Naive thymus-derived CD4-positive, alpha-beta T cell (primary cell): ENCODE measurements at regions of chr1 and their contacts with region 1.

Region 1: GRCh38 chr1:3618881-3619671 is 5.7 kb upstream of the TPRG1L start:
- DNase-seq: peak; percentile 47 to 82 (median 75)
- ATAC-seq: peak; percentile 96
- H3K4me3 ChIP-seq: no peak overlapping the region
- H3K4me3 Mint-ChIP-seq: peak overlapping the region in 2 of 10 donors; percentile 17 to 37
- H3K27ac ChIP-seq: no peak overlapping the region
- H3K27ac Mint-ChIP-seq: peak overlapping the region in 2 of 9 donors; percentile 1 to 59
- H3K4me1 ChIP-seq: peaks cover 11 to 15% of the 10 kb centered on the region in 2 donors
- H3K4me1 Mint-ChIP-seq: peaks cover 19 to 46% (median 34%) of the 10 kb centered on the region in 7 donors
- H3K27me3 ChIP-seq: no peaks in the 10 kb centered on the region
- H3K27me3 Mint-ChIP-seq: peaks cover 0 to 14% (median 6%) of the 10 kb centered on the region in 5 donors

Region 2: GRCh38 chr1:3491291-3492246 is 127.5 kb before region 1 on chr1:
- CTCF ChIA-PET with region 1: interaction called, 26 read pairs
- POLR2A ChIA-PET with region 1: interaction called, 5 read pairs
- intact Hi-C with region 1: loop called (anchors 1 kb)
- DNase-seq: peak; percentile 65 to 90 (median 83)
- ATAC-seq: peak; percentile 96
- H3K4me3 ChIP-seq: no peak overlapping the region
- H3K4me3 Mint-ChIP-seq: peak overlapping the region in 7 of 10 donors; percentile 26 to 76 (median 62)
- H3K27ac ChIP-seq: no peak overlapping the region
- H3K27ac Mint-ChIP-seq: peak overlapping the region in 2 of 9 donors; percentile 28 to 38
- H3K4me1 ChIP-seq: no peaks in the 10 kb centered on the region
- H3K4me1 Mint-ChIP-seq: peaks cover 2 to 7% (median 5%) of the 10 kb centered on the region in 7 donors
- H3K27me3 ChIP-seq: no peaks in the 10 kb centered on the region
- H3K27me3 Mint-ChIP-seq: no peaks in the 10 kb centered on the region

Region 3: GRCh38 chr1:3518256-3518655 is 100.8 kb before region 1 on chr1:
- CTCF ChIA-PET with region 1: interaction called, 4 read pairs
- POLR2A ChIA-PET with region 1: interaction called, 4 read pairs
- intact Hi-C with region 1: loop called in 1 of 2 experiments (anchors 1 kb)
- DNase-seq: peak in 4 of 9 donors; percentile 28 to 35 (median 32)
- ATAC-seq: no peak
- H3K4me3 ChIP-seq: no peak overlapping the region
- H3K4me3 Mint-ChIP-seq: no peak overlapping the region
- H3K27ac ChIP-seq: no peak overlapping the region
- H3K27ac Mint-ChIP-seq: no peak overlapping the region
- H3K4me1 ChIP-seq: no peaks in the 10 kb centered on the region
- H3K4me1 Mint-ChIP-seq: peaks cover 0 to 2% (median 0%) of the 10 kb centered on the region in 7 donors
- H3K27me3 ChIP-seq: no peaks in the 10 kb centered on the region
- H3K27me3 Mint-ChIP-seq: no peaks in the 10 kb centered on the region

Region 4: DNA sequence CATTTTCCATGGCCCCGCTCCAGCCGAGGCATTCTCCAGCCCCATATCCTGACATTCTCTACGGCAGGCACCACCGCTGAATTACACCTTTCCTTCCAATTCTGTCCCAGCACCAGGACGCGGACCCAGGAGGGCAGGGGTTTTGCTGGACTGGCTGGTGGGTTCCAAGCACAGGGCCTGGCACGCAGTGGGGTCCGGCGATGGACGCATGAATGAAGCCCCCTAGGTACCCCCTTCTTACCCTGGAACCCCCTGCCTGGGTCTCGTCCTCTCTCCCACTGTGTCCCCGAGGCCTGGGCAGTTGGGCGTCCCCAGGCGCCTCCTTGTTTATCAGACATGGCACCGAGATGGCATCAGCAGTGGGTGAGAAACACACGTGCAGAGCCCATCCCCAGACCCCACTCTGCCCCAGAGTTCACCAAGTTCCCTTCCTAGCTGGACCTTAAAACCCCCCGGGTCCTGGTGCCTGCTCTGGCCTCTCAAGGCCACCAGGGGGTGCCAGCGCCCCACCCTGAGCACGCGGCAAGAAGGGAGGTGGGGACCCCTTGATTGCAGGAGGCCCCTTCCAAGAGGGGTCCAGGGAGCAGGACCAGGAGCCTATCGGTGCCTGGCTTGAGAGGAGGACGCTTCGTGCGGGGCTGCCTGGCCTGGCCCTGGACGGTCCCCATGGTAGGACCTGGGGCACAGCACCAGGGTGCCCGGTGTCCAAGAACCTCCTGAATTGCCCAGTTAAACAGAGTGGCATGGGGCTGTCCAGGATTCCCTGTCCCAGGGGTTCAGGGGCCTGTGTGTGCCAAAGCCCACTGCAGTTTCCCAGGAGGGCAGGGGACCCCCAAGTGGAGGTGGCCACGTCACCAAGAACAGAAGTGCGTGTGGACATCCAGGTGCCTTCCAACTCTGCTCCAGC is 53.9 kb before region 1 on chr1:
- CTCF ChIA-PET with region 1: interaction called, 16 read pairs
- POLR2A ChIA-PET with region 1: no interaction called
- intact Hi-C with region 1: loop called in 1 of 2 experiments (anchors 1 kb)
- DNase-seq: peak in 8 of 9 donors; percentile 24 to 56 (median 42)
- ATAC-seq: peak; percentile 52
- H3K4me3 ChIP-seq: no peak overlapping the region
- H3K4me3 Mint-ChIP-seq: no peak overlapping the region
- H3K27ac ChIP-seq: no peak overlapping the region
- H3K27ac Mint-ChIP-seq: no peak overlapping the region
- H3K4me1 ChIP-seq: no peaks in the 10 kb centered on the region
- H3K4me1 Mint-ChIP-seq: no peaks in the 10 kb centered on the region
- H3K27me3 ChIP-seq: no peaks in the 10 kb centered on the region
- H3K27me3 Mint-ChIP-seq: no peaks in the 10 kb centered on the region